Panc1 (cell line): ENCODE measurements at regions of chr6 and their contacts with region 1.

Region 1: DNA sequence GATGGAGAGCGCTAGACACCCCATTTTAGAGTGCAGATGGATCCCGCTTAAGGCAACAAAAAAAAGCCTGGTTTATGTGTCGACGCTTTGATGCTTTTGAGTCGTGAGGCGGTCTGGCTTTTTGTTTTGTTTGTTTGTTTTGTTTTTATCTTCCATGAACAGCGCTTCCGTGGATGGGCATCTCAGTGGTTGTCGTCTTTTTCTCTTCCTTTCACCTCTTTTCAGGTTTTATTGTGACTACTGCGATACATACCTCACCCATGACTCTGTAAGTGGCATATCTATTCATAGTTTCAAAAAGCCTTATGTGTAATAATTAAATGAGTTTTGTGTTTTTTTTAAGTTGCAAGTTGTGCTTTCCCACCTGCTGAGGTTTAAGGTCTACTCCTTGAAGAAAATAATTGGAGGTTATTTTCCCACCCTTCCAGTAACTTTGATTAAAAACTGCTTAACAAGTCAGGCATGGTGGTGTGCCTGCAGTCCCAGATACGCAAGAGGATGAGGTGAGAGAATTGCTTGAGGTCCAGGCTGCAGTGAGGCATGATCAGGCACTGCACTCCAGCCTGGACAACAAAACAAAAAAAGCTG is 476 bp downstream of the SNRPC start:
- DNase-seq: no peak
- ATAC-seq: peak; percentile 29
- H3K4me3 ChIP-seq: peak overlapping the region; percentile 70 to 100
- H3K27ac ChIP-seq: peak overlapping the region; percentile 97
- H3K4me1 ChIP-seq: no peaks in the 10 kb centered on the region
- H3K27me3 ChIP-seq: no peaks in the 10 kb centered on the region
- CTCF ChIP-seq: no peak

Region 2: DNA sequence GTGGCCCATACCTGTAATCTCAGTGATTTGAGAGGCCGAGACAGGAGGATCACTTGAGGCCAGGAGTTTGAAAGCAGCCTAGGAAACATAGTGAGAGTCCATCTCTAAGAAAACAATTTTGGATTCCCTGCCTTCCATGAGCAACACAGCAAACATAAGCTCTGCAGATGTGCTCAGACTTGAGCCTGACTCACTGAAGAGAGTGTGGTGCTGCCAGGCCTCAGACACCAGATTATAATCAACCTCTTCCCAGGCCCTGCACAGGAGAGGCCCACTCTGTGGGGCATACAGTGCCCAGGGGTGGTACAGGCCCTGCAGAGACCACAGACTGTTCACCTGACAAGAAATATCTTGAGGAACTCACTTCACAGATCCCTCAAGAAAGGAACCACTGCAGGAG is 1662.1 kb before region 1 on chr6:
- CTCF ChIA-PET with region 1: no interaction called
- POLR2A ChIA-PET with region 1: interaction called, 19 read pairs
- in situ Hi-C with region 1: no loop called
- intact Hi-C with region 1: no loop called
- DNase-seq: no peak
- ATAC-seq: no peak
- H3K4me3 ChIP-seq: no peak overlapping the region
- H3K27ac ChIP-seq: no peak overlapping the region
- H3K4me1 ChIP-seq: no peaks in the 10 kb centered on the region
- H3K27me3 ChIP-seq: peaks cover 4% of the 10 kb centered on the region
- CTCF ChIP-seq: no peak

Region 3: GRCh38 chr6:34994693-34995092 is 236.9 kb after region 1 on chr6:
- CTCF ChIA-PET with region 1: no interaction called
- POLR2A ChIA-PET with region 1: no interaction called
- in situ Hi-C with region 1: no loop called
- intact Hi-C with region 1: no loop called
- DNase-seq: no peak
- ATAC-seq: no peak
- H3K4me3 ChIP-seq: no peak overlapping the region
- H3K27ac ChIP-seq: no peak overlapping the region
- H3K4me1 ChIP-seq: no peaks in the 10 kb centered on the region
- H3K27me3 ChIP-seq: no peaks in the 10 kb centered on the region
- CTCF ChIP-seq: no peak